ENCODE measurements at regions of chr11 and their contacts with region 1.

Region 1: DNA sequence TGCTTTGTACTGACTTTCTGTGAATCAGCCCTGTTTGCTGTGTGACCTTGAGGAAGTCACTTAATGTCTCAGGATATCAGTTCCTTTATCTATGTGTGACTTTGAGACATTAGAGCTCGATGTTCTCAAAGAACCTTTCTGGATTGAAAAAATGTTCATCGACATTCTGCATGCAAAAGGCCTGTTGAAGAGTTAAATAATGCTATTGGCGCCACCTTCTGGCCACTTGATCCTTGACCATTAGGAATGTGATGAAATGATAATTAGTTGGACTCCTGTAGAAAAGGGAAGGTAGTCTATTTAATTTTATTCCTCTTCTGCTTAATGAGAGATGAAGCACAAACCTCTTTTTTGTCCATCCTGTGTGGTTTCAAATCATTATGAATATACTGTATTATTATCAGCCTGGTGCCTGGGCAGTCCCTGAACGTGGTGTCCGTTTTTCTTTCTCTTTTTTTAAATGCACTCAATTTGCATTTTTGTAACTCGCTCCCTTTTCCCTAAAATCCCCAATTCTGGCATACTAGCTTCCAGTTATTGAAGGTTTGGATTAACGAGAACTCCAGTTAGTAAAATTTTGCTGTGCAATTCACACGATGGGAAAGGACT is 20.7 kb downstream of the ELF5 start:
- DNase-seq: peak in 1 of 2 donors; percentile 37
- ATAC-seq: peak in 2 of 4 donors; percentile 64 to 80
- H3K4me3 ChIP-seq: no peak overlapping the region
- H3K27ac ChIP-seq: no peak overlapping the region
- H3K4me1 ChIP-seq: no peaks in the 10 kb centered on the region
- H3K27me3 ChIP-seq: no peaks in the 10 kb centered on the region
- CTCF ChIP-seq: peak; percentile 71

Region 2: DNA sequence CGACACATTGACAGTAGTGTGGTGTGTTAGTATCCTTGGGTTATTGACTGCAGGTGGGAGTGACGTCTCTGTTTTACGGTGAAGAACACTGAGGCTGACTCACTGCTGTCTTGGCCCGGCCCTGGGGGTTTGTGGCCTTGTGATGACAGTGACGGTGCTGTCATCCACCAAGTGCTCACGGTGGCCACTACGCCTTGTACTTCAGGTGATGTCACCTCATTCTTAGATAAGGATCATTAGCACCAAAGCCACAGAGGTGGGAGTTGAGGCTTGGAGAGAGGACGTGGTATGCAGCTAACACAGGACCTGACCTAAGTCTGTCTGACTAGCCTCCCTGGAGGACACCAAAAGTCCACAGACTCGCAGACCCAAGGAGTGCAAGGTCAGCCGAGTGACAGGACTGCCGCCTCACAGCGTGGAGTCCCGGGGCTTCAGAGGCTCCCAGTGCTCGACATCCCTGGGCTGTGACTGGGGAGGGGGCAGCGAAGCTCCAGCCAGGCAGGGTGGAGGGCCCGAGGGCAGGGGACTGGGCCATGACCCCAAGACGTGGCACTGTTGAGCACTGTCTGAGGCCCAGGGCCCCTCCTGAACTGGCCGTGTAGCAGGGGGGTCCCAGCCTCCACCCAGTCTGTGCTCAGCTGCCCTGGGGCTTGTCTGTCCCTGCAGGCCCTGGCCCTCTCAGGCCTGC is 331.0 kb before region 1 on chr11:
- intact Hi-C with region 1: loop called in 1 of 2 experiments (anchors 5 kb)
- DNase-seq: peak in 1 of 2 donors; percentile 16
- ATAC-seq: peak in 1 of 4 donors; percentile 31
- H3K4me3 ChIP-seq: no peak overlapping the region
- H3K27ac ChIP-seq: no peak overlapping the region
- H3K4me1 ChIP-seq: no peaks in the 10 kb centered on the region
- H3K27me3 ChIP-seq: no peaks in the 10 kb centered on the region
- CTCF ChIP-seq: no peak

Region 3: DNA sequence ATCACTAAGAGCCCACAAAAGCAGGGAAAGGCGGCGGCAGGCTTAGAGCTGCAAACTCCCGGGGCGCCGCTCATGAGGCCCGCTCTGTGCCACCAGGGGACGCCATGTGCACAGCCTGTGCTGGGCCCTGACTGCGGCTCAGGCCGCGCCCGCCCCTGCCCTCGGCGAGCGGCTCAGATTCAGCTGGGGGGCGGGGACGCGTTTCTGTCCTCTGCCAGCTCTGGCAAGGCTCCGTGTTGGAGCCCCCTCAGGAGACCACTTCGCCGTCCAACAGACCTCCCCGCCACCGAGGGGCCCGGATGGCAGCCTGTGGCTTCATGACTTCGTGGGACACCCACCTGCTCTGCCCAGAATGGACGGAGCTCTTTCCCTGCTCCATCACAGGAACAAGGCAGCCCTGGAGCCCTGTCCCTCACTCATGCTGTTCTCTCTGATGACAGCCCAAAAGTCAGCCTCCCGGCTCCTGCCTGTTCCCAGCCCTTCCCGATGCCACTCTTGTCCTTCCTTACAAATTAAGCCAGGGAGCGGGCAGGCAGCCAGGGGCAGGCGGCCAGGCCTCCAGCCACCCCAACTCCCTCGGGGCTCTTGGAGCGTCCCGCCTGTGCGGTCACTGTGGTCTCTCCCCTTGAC is 318.4 kb before region 1 on chr11:
- intact Hi-C with region 1: loop called (anchors 5 to 10 kb)
- DNase-seq: peak; percentile 85 to 92
- ATAC-seq: peak; percentile 98 to 99 (median 98)
- H3K4me3 ChIP-seq: peak overlapping the region; percentile 58
- H3K27ac ChIP-seq: peak overlapping the region; percentile 19
- H3K4me1 ChIP-seq: peaks cover 7% of the 10 kb centered on the region
- H3K27me3 ChIP-seq: no peaks in the 10 kb centered on the region
- CTCF ChIP-seq: peak; percentile 96

Region 4: DNA sequence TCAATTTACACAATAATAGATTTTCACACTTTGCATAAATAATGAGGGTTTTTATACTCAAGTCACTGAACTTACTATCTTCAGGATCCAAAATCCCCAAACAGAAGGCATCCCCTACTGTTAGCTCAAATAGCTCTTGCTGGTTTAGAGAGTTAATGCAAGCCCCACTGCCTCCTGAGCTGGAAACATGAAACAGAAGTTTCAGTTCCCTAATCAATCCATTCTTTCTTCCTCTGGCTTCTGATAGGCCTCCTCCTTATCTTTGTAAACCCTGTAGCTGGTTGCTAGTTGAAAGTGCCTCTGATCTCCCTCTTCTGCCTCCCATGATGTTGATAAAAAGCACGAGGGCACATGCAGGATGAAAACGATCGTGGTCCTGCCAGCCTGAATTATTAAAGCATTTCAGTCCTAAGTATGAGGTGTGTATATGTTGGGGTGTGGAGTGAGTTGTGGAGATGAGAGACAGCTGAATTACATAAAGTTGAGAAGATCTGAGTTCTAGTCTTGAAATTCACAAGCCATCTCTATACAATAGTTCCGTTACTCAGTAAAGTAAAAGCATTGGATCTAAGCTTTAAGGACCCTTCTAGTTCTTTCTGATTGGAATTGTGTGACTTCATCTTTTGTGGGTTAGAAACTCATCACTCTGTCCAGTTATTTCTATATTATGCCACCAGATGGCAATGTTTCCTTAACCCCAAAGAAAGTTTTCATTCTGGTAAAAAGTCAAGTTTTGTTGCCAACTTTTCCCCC is 93.0 kb after region 1 on chr11:
- intact Hi-C with region 1: no loop called
- DNase-seq: no peak
- ATAC-seq: peak; percentile 56 to 83 (median 64)
- H3K4me3 ChIP-seq: peak overlapping the region; percentile 35
- H3K27ac ChIP-seq: no peak overlapping the region
- H3K4me1 ChIP-seq: peaks cover 3% of the 10 kb centered on the region
- H3K27me3 ChIP-seq: peaks cover 0 to 3% (median 0%) of the 10 kb centered on the region in 3 donors
- CTCF ChIP-seq: peak; percentile 74

Measured in psoas muscle (tissue), 8 donors.